ENCODE measurements at regions of chr1 and their contacts with region 1.

Region 1: DNA sequence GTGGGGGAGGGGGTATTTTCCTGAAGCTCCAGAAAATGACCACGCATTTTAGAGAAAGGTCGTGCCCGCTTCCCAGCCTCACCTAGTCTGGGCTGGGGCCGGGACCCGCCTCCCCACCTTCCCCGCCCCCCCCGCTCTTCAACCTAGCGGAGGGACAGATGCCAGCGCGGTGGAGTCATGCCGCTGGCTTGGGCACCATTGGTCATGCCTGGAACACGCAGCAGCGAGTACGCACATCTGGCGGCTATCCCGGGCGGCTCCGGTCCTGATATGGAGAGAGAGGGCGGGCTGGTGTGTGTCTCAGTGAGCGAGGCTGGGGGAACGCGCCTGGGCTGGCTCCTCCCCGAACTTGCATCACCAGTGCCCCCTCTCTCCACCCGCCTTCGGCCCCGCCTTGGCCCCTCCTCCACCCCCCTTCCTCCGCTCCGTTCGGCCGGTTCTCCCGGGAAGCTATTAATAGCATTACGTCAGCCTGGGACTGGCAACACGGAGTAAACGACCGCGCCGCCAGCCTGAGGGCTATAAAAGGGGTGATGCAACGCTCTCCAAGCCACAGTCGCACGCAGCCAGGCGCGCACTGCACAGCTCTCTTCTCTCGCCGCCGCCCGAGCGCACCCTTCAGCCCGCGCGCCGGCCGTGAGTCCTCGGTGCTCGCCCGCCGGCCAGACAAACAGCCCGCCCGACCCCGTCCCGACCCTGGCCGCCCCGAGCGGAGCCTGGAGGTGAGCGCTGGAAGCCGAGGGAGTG is at the start of gene ATF3:
- DNase-seq: peak; percentile 100

Region 2: DNA sequence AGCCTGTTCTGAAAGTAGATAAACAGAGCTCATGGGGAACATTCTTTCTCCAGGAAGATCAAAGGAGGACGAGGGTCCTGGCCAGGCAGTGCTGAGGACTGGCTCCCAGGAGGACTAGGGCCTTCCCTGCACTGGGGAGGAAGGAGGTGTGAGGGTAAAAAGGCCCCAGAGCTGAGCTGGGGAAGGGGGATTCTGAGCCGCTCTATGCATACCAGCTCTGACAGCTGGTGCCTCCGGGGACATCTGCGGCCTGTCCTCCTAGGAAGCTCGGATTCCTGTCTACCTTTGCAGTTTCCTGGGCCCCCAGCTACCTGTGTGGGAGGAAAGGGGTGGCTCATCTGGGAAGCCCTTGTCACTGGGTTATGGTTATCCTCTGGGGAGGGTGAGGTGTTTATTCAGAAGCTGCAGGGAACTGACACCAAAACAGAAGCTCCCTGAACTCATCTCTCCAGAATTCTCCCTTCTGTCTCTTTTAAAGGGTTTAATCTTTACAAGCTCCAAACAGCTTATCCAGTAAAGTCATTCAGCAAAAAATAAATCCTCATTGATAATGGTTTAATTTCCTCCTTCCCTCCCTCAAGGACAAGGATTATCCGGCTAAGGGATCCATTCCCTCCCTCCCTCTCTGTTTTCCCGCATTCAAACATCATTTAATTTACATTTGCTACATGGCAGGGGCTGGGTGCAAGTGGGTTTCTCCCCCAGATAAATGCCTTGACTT is 144.7 kb before region 1 on chr1:
- CTCF ChIA-PET with region 1: no interaction called
- POLR2A ChIA-PET with region 1: interaction called, 10 read pairs
- DNase-seq: no peak

Region 3: DNA sequence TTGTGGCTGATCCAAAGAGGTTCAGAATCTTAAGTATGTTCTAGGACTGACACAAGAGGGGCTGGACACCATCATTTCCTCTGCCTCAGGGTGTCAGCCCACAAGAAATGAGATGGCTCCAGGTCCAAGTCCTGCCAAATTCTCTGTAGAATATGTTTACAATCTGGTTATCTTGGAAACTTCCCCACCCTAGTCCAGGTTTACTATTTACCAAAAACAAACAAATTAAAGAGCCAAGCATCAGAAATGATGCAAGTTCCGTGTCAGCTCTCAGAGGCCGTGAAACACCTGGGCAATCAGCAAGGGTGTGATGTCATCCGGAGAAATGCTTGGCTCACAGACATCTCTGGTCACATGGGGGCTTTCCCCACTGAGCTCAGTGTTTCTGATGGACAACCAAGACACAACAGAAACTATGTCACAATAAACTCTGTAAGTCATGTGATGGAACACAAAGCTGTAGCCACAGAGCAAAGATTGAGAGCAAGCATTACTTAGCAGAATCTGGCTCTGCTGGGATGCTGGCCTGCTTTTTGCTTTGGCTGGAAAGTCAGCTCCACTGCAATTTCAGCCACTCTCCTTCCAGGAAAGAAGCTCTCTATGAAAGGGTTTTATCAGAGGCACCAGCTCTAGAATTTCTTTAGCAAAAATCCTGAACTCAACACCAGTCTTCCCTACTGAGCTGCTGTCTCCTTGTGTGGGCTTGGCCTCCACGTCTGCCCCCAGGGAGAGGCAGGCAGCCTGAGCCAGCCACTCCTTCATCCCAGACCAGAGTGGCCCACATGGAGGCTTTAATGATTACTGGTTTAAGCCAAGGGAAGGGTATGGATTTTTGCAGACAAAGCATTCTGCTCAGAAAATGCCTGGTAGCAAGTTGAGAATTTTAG is 119.7 kb before region 1 on chr1:
- CTCF ChIA-PET with region 1: no interaction called
- POLR2A ChIA-PET with region 1: interaction called, 18 read pairs
- DNase-seq: no peak

Region 4: GRCh38 chr1:212529211-212529741 is 79.1 kb before region 1 on chr1:
- CTCF ChIA-PET with region 1: no interaction called
- POLR2A ChIA-PET with region 1: interaction called, 25 read pairs
- DNase-seq: no peak

Region 5: DNA sequence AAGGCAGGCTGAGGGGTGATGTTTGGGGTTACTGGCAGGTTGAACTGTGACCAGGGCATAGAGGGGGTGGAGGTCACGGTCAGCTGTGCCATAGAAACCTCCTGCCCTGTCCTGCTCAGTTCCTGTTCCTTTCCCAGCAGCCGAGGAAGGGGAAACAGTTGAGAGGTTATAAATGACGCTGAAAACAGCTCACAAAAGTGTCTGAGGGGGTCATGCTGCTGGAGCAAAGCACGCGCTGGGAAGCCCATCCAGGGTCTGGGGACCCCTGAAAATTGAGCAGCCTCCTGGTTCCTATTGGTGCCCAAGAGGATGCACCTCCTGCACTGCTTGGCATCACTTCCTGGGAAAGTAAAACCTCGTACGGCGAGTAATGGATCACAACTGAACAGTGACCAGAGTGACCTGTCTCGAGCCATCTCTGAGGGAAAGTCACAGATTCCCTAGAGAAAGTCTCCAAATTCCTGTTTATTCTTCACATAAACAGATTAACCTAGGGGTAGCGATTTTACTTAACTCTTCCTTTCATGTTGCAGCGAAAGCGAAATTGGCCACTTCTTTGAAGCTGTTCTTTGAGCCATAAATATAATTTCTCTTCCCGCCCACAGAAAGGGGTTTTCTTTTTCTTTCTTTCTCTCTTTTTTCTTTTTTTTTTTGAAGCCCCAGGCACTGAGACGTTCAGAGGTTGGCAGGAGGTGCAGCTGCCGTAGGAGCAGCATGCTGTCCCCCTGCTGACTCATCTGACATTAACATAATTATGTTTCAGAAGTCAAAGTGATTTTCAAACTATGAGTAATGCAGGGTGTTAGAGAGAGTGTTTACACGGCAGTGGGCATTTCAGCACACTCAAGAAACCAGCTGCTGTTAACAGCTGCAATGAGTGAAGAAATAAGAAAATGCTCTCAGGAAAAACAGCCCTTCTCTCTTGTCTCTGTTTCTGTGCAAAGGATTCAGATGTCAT is 41.6 kb before region 1 on chr1:
- CTCF ChIA-PET with region 1: no interaction called
- POLR2A ChIA-PET with region 1: interaction called, 32 read pairs
- DNase-seq: peak; percentile 62

Region 6: DNA sequence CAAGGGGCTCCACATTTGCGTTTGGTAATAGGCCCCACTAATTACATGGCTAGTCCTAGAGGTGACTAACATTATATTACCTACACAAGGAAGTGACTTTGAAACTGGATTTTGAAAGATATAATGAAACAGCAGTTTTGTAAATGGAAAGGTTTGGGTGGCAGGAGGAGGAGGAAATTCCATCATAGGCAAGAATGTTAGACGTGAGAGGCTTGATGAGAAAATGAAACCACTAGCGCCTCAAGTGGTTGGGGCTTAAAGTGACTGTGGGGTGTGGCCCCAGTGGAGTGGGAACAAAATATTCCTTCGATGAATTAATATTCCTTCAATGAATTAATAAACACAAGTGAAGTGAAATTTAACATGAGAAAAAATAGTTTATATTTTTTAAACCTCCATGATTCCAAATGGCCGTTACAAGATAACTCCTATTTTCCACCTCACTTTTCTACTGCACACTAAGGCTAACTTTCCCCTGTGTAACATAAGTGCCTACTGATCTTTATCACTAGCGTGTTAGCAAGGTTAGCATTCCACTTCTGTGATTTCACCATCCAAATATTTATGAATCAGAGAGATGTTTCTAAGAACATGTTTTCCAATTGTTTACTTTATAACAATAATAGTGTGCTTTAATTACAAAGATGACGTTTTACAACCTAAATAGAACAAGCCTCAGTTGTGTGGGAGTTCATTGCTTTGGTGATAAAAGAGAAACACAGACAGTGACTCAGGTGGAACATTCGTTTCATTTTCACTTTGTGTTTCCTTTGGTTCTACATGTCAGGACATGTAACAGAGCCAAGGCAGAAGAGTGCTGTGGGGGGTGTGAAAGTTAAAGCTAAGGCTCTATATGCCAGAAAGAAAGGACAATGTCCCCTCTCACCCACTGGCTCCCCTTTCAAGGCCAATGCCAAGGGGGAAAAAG is 12.3 kb before region 1 on chr1:
- CTCF ChIA-PET with region 1: interaction called, 4 read pairs
- POLR2A ChIA-PET with region 1: interaction called, 39 read pairs
- DNase-seq: peak; percentile 74

Region 7: DNA sequence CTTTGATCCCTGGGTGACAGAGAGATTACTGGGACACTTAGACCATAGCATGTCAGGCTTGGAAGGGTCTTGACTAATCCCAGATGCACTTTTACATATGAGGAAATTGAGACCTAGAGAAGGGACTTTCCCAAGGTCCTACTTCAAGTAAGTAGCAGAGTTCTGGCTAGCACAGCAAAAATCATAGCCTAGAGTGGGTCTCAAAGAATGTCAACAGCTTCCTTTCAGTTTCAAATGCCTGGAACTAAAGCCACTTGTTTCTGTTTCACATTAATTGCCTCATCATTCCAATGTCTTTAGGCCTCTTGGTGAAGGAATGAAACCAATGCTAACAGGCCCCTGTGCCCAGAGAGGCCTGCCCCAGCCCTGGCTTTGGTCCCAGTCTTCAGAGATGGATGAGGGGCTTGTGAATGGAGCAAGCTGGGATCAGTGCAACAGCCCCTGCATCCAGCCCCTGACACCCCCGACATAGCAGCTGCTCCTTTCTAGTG is 26.8 kb after region 1 on chr1:
- CTCF ChIA-PET with region 1: no interaction called
- POLR2A ChIA-PET with region 1: no interaction called
- DNase-seq: no peak

Region 8: DNA sequence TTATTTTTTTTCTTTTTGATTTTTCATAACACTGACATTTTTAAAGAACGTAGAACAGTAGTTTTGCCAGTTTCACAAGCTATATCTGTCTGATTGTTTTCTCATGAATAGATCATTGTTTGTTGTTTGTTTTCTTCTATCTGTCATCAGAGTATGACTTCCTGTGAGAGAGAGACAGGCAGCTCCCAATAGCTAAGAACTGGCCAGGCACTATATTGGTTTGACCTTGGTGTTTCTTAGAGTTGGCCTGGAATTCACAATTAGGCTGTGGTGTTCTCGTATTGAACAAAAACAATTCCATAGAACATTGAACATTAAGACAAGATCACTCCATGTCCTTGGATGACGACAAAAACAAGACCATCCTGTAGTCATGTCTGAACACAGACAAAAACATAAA is 486.1 kb after region 1 on chr1:
- CTCF ChIA-PET with region 1: no interaction called
- POLR2A ChIA-PET with region 1: no interaction called
- DNase-seq: no peak

Measured in HEK293T (cell line).